Dorsolateral prefrontal cortex (tissue), 120 donors: ENCODE measurements at regions of chr5 and their contacts with region 1.

Region 1: DNA sequence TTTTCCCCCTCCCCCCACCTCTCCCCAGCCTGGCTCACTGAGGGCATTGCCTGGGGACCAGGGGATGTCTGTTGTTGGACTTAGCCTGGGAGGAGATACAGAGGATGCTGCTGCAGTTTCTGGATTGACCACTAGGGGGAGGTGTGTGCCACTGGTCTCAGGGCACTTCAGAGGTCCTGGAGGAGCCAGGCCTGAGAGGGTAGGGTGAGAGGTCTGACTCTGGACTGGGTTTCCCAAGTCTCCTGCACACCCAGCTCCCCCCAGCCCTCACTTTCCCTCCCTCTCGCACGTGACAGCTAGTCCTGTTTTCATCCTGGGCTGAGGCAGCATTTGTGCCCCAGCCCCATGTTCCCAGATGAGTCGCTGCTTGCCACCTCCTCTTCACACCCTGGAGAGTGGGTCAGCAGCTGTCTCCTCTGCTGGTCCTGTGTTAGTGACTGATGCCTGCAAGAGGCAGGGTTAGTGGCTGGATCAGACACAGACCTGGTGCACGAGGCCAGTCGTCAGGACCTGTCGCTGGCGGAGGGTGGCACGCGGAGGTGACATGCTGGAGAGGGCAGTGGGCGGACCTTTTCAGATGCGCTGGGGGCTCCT is 4.4 kb downstream of the IL3 start:
- DNase-seq: peak in 9 of 10 donors; percentile 56 to 82 (median 73)
- H3K4me3 ChIP-seq: no peak overlapping the region
- H3K27ac ChIP-seq: no peak overlapping the region
- H3K27me3 ChIP-seq: no peaks in the 10 kb centered on the region
- CTCF ChIP-seq: peak; percentile 67 to 96 (median 90)

Region 2: GRCh38 chr5:131423056-131423455 is 641.8 kb before region 1 on chr5:
- intact Hi-C with region 1: loop called in 1 of 2 experiments (anchors 5 kb)
- DNase-seq: no peak
- H3K4me3 ChIP-seq: no peak overlapping the region
- H3K27ac ChIP-seq: peak overlapping the region in 6 of 59 donors; percentile 8 to 51 (median 32)
- H3K27me3 ChIP-seq: no peaks in the 10 kb centered on the region
- CTCF ChIP-seq: peak in 55 of 56 donors; percentile 14 to 74 (median 44)

Region 3: GRCh38 chr5:131589510-131590348 is 475.1 kb before region 1 on chr5:
- intact Hi-C with region 1: loop called in 1 of 2 experiments (anchors 5 kb)
- DNase-seq: no peak
- H3K4me3 ChIP-seq: no peak overlapping the region
- H3K27ac ChIP-seq: peak overlapping the region in 46 of 59 donors; percentile 2 to 77 (median 48)
- H3K27me3 ChIP-seq: no peaks in the 10 kb centered on the region
- CTCF ChIP-seq: peak; percentile 68 to 97 (median 87)

Region 4: DNA sequence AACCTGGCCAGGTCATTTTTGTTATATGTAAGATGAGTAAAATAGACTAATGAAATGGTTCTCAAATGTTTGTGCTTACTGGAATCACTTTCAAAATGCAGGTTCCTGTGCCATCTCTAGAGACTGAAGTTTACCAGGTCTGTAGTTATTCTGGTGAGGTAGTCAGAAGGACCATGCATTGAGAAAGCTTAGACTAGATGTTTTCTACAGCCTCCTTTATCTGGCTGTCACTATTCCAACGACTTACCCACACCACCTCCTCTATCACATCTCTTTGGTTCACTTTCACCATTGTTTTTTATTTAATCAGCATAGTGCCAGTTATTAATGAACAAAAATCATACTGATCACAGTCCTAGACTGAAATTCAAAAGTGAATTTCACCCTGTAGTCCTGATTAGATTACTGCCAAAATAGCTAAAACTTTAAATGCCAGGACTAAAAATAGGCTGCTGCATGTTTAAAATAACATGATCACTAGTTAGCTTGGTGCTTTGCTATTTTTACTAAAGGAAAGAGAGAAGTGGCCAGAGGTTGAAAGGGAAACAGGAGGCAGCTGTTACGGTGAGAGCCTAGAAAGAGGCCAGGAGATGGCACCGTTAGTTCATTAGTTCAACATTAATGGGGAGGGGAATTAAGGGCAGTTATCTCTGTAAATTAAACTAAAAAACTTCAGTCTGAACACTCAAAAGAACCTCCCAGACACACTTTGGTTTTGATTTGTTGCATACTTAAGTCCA is 254.2 kb before region 1 on chr5:
- intact Hi-C with region 1: loop called in 1 of 2 experiments (anchors 5 kb)
- DNase-seq: no peak
- H3K4me3 ChIP-seq: no peak overlapping the region
- H3K27ac ChIP-seq: peak overlapping the region in 7 of 59 donors; percentile 2 to 65 (median 23)
- H3K27me3 ChIP-seq: no peaks in the 10 kb centered on the region
- CTCF ChIP-seq: peak in 54 of 56 donors; percentile 13 to 73 (median 46)